H1 (cell line): ENCODE measurements at regions of chr17 and their contacts with region 1.

Region 1: GRCh38 chr17:47649153-47649971 is at the start of gene KPNB1:
- DNase-seq: peak; percentile 96 to 99
- H3K4me3 ChIP-seq: peak within 1 kb of the TSS; percentile 79 to 99 (median 93)
- H3K27ac ChIP-seq: peak within 1 kb of the TSS; percentile 83
- H3K4me1 ChIP-seq: peaks cover 0 to 6% (median 4%) of the 10 kb centered on the region in 4 experiments; a peak in 5 of 7 replicates
- H3K27me3 ChIP-seq: no peaks in the 10 kb centered on the region
- CTCF ChIP-seq: no peak
- EP300 ChIP-seq: peak; percentile 10 to 79; a peak in 2 of 3 replicates
- POLR2A ChIP-seq: peak; percentile 3 to 81
- RAD21 ChIP-seq: no peak
- total RNA-seq, gene KPNB1: 625 and 635 TPM in 2 replicates

Region 2: DNA sequence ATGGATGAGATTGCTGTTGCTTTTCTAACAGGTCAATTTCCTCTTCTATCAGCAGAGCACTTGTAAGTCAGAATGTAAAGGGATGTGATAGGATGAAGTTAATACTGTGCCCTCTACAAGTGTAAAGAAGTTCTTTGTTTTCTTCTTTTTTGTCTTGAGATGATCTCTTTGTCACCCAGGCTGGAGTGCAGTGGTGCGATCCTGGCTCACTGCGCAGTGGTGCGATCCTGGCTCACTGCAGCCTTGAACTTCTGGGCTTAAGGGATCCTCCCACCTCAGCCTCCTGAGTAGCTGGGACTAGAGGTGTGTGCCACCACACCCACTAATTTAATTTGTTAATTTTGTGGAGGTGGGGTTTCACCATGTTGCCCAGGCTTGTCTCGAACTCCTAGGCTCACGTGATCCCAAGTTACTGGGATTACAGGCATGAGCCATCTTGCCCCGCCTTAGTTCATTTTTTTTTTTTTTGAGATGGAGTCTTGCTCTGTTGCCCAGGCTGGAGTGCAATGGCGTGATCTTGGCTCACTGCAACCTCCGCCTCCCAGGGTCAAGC is 21.3 kb before region 1 on chr17:
- CTCF ChIA-PET with region 1: interaction called, 6 read pairs
- POLR2A ChIA-PET with region 1: interaction called, 17 read pairs
- DNase-seq: no peak
- H3K4me3 ChIP-seq: no peak overlapping the region
- H3K27ac ChIP-seq: no peak overlapping the region
- H3K4me1 ChIP-seq: no peaks in the 10 kb centered on the region
- H3K27me3 ChIP-seq: no peaks in the 10 kb centered on the region
- CTCF ChIP-seq: no peak
- EP300 ChIP-seq: no peak
- POLR2A ChIP-seq: no peak
- RAD21 ChIP-seq: no peak

Region 3: GRCh38 chr17:47633996-47634395 is 15.4 kb before region 1 on chr17:
- CTCF ChIA-PET with region 1: interaction called, 6 read pairs
- POLR2A ChIA-PET with region 1: interaction called, 16 read pairs
- DNase-seq: no peak
- H3K4me3 ChIP-seq: no peak overlapping the region
- H3K27ac ChIP-seq: no peak overlapping the region
- H3K4me1 ChIP-seq: no peaks in the 10 kb centered on the region
- H3K27me3 ChIP-seq: no peaks in the 10 kb centered on the region
- CTCF ChIP-seq: no peak
- EP300 ChIP-seq: no peak
- POLR2A ChIP-seq: no peak
- RAD21 ChIP-seq: no peak